ENCODE measurements at regions of chr2 and their contacts with region 1.

Region 1: GRCh38 chr2:237165405-237166276 is 80.0 kb downstream of the COPS8 start:
- DNase-seq: peak in 1 of 2 donors; percentile 9
- H3K4me3 ChIP-seq: no peak overlapping the region
- H3K27ac ChIP-seq: no peak overlapping the region
- H3K4me1 ChIP-seq: no peaks in the 10 kb centered on the region
- H3K27me3 ChIP-seq: no peaks in the 10 kb centered on the region
- CTCF ChIP-seq: peak in 4 of 6 experiments; percentile 6 to 31 (median 20)
- POLR2A ChIP-seq: no peak

Region 2: GRCh38 chr2:236731878-236732580 is 433.6 kb before region 1 on chr2:
- intact Hi-C with region 1: no loop called
- DNase-seq: peak; percentile 63 to 78
- H3K4me3 ChIP-seq: no peak overlapping the region
- H3K27ac ChIP-seq: peak overlapping the region; percentile 78 to 80 (median 78)
- H3K4me1 ChIP-seq: peaks cover 28 to 41% of the 10 kb centered on the region in 2 donors
- H3K27me3 ChIP-seq: no peaks in the 10 kb centered on the region
- CTCF ChIP-seq: no peak
- POLR2A ChIP-seq: no peak

Region 3: DNA sequence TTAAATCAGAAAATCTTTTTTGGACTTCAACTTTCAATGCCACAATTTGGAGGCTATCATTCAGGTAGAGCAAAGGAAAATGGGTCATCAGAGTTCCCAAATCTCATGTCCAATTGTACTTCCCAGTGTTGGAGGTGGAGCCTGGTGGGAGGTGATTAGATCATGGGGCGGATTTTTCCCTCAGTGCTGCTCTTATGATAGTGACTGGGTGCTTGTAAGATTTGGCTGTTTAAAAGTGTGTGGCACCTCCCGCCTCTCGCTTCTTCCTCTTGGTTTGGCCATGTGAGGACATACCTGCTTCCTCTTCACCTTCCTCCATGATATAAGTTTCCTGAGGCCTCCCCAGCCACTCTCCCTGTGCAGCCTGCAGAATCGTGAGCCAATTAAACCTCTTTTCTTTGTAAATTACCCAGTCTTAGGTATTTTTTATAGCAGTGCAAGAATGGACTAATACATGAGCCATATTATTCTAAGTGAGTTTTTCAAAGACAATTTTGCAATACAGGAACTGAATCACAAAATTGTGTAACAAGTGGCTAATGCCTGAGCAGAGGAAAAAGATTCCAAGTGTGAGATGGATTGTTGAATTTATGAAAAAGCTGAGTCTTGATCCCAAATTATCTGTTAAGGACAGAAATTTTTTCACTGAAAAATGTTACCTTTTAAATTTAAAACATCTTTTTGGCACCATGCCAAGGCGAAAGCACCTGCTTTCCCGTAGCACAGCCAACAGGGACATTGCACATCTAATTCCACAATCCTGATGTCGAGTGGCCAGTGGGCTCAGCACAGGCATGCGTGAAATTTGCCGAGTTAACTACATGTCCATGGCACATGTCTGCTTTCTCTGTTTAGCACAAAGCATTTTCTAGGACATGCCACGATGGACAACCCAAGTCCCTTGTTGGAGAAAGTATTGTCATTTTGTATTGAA is 97.5 kb after region 1 on chr2:
- intact Hi-C with region 1: no loop called
- DNase-seq: no peak
- H3K4me3 ChIP-seq: no peak overlapping the region
- H3K27ac ChIP-seq: no peak overlapping the region
- H3K4me1 ChIP-seq: no peaks in the 10 kb centered on the region
- H3K27me3 ChIP-seq: no peaks in the 10 kb centered on the region
- CTCF ChIP-seq: no peak
- POLR2A ChIP-seq: no peak

Region 4: DNA sequence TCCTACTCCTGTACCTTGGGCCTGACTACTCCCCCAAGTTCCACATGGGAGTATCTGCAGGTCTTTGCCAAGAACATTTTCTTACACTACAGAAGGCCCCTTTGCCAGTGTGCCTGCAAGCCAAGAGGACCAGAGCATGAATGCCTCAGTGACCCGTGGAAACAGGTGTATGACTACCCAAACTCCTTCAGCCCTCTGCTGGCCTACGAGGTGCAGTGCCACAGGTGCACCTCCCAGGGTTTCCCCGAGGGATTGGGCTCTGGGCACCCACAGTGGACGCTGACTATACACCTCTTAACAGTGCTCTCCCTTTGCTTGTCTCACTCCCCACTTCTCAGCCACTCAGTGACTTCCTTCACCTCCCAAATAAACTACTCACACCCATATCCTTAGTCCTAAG is 156.9 kb after region 1 on chr2:
- intact Hi-C with region 1: loop called (anchors 5 kb)
- DNase-seq: peak; percentile 73 to 83
- H3K4me3 ChIP-seq: no peak overlapping the region
- H3K27ac ChIP-seq: peak overlapping the region in 2 of 3 donors; percentile 57 to 69
- H3K4me1 ChIP-seq: peaks cover 3 to 31% of the 10 kb centered on the region in 2 donors
- H3K27me3 ChIP-seq: no peaks in the 10 kb centered on the region
- CTCF ChIP-seq: peak; percentile 31 to 87 (median 74)
- POLR2A ChIP-seq: no peak

Region 5: GRCh38 chr2:237413777-237414661 is 248.4 kb after region 1 on chr2 and contains the start of gene COL6A3:
- intact Hi-C with region 1: loop called (anchors 5 kb)
- DNase-seq: peak in 1 of 2 donors; percentile 28
- H3K4me3 ChIP-seq: peak within 1 kb of the TSS in 2 of 3 donors; percentile 12 to 14
- H3K27ac ChIP-seq: peak within 1 kb of the TSS; percentile 26 to 79 (median 64)
- H3K4me1 ChIP-seq: no peaks in the 10 kb centered on the region
- H3K27me3 ChIP-seq: no peaks in the 10 kb centered on the region
- CTCF ChIP-seq: no peak
- POLR2A ChIP-seq: no peak
- total RNA-seq, gene COL6A3: 82.6 to 168 (median 146) TPM